HCT116 (cell line): ENCODE measurements at regions of chr18 and their contacts with region 1.

Region 1: DNA sequence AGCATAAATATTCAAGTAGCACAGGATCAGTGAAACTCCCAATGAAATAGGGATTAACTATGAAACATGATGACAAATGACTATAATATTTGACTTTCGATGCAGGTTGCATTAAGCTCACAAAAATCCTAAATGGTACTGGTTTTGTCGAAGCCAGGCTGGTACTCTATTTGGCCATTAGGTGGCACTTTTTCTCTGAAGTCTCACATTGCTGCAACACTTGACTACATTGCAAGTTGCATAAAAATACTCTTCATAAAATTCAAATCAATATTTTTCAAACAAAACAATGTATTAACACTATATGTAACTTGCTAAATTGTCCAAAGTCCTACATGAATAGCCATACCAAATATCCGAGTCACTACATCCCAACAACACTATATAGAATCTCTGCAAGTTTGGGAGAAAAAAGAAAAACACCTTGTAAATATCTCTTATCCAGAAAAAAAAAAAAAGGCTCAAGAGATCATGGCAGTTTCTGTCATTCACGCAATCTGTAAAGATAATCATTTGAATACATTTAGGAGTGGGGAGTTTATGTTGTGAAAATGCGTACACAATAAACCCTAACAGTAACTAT is 9.5 kb downstream of the RTTN start:
- DNase-seq: no peak
- ATAC-seq: peak; percentile 80
- H3K4me3 ChIP-seq: no peak overlapping the region
- H3K27ac ChIP-seq: peak overlapping the region; percentile 43
- H3K4me1 ChIP-seq: peaks cover 20 to 31% of the 10 kb centered on the region in 2 experiments
- H3K27me3 ChIP-seq: no peaks in the 10 kb centered on the region
- CTCF ChIP-seq: peak; percentile 76 to 91 (median 79)
- POLR2A ChIP-seq: no peak
- RAD21 ChIP-seq: peak; percentile 88

Region 2: GRCh38 chr18:69978732-69979715 is 216.9 kb before region 1 on chr18:
- CTCF ChIA-PET with region 1: no interaction called
- POLR2A ChIA-PET with region 1: no interaction called
- RAD21 ChIA-PET with region 1: no interaction called
- intact Hi-C with region 1: no loop called
- DNase-seq: no peak
- ATAC-seq: no peak
- H3K4me3 ChIP-seq: no peak overlapping the region
- H3K27ac ChIP-seq: no peak overlapping the region
- H3K4me1 ChIP-seq: no peaks in the 10 kb centered on the region
- H3K27me3 ChIP-seq: no peaks in the 10 kb centered on the region
- CTCF ChIP-seq: no peak
- POLR2A ChIP-seq: no peak
- RAD21 ChIP-seq: no peak

Region 3: GRCh38 chr18:70181015-70181414 is 14.9 kb before region 1 on chr18:
- CTCF ChIA-PET with region 1: interaction called, 18 read pairs
- POLR2A ChIA-PET with region 1: interaction called, 3 read pairs
- RAD21 ChIA-PET with region 1: no interaction called
- intact Hi-C with region 1: no loop called
- DNase-seq: peak; percentile 94
- ATAC-seq: peak; percentile 88
- H3K4me3 ChIP-seq: peak overlapping the region in 1 of 2 experiments; percentile 25; a peak in 2 of 4 replicates
- H3K27ac ChIP-seq: peak overlapping the region; percentile 97
- H3K4me1 ChIP-seq: peaks cover 55 to 65% of the 10 kb centered on the region in 2 experiments
- H3K27me3 ChIP-seq: no peaks in the 10 kb centered on the region
- CTCF ChIP-seq: no peak
- POLR2A ChIP-seq: no peak
- RAD21 ChIP-seq: 0 out of 2 replicates have a peak, but pooled peaks have one; percentile 31

Region 4: DNA sequence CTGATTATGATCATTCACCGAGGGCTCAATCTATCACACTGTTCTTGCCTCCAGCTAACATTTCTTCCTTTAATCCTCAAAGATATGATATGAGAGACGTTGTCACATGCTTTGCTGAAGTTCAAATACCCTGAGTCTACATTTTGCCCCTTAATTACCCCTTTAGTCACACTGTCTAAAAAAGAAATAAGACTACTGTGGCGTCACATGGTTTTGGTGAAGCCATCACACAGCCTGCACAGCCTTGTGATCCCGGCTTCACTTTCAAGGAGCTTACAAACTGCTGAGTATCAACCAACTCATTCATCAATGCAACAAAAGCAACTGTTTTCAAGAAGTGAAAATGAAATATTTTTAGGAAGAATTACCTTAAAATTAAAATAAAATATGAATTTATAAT is 61.1 kb after region 1 on chr18:
- CTCF ChIA-PET with region 1: no interaction called
- POLR2A ChIA-PET with region 1: no interaction called
- RAD21 ChIA-PET with region 1: no interaction called
- intact Hi-C with region 1: no loop called
- DNase-seq: no peak
- ATAC-seq: no peak
- H3K4me3 ChIP-seq: no peak overlapping the region
- H3K27ac ChIP-seq: no peak overlapping the region
- H3K4me1 ChIP-seq: no peaks in the 10 kb centered on the region
- H3K27me3 ChIP-seq: no peaks in the 10 kb centered on the region
- CTCF ChIP-seq: no peak
- POLR2A ChIP-seq: no peak
- RAD21 ChIP-seq: no peak

Region 5: DNA sequence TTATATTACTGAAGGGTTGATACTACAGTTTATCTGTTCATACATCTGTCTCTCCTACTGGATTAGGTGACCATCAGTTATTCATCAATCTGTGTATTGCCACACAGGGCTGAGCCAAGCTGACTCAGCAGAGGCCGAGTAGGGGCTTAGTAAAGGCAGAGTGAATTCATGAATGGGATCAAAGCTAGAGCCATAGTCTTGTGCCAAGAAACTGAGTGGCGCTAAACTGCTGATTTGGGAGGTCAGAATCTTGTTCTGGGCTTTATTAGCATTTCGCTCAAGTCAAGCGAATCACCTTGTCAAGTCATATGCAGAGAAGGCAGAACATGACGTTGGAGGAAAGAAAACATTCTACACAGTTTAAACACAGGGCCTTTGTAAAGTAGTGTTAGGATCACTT is 127.0 kb after region 1 on chr18:
- CTCF ChIA-PET with region 1: no interaction called
- POLR2A ChIA-PET with region 1: no interaction called
- RAD21 ChIA-PET with region 1: no interaction called
- intact Hi-C with region 1: no loop called
- DNase-seq: no peak
- ATAC-seq: peak; percentile 32; the same call in 1 of the 2 replicates
- H3K4me3 ChIP-seq: no peak overlapping the region
- H3K27ac ChIP-seq: peak overlapping the region; percentile 0; the same call in 1 of the 2 replicates
- H3K4me1 ChIP-seq: peaks cover 12 to 32% of the 10 kb centered on the region in 2 experiments
- H3K27me3 ChIP-seq: no peaks in the 10 kb centered on the region
- CTCF ChIP-seq: no peak
- POLR2A ChIP-seq: no peak
- RAD21 ChIP-seq: no peak

Region 6: DNA sequence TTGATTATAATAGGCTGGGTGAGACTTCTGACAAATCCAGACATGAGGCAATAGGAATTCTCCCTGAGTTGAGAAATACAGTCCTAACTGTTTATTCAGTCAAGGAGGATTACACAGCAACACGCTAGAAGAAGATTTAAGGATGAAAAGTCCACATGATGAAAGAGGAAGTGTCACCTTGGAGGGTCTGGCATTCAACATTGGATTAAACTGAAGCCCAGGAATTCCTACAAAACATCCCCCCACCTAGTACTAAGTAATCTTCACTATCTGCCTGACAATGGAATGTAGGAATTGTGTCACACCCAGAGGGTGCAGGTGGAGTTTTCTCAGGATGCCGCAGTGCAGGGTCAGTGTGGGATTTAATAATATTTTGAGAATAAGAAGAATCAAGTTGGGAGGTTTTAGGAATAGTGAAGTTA is 235.3 kb after region 1 on chr18:
- CTCF ChIA-PET with region 1: interaction called, 64 read pairs
- POLR2A ChIA-PET with region 1: interaction called, 3 read pairs
- RAD21 ChIA-PET with region 1: interaction called, 8 to 12 read pairs
- intact Hi-C with region 1: loop called (anchors 1 kb)
- DNase-seq: no peak
- ATAC-seq: no peak
- H3K4me3 ChIP-seq: no peak overlapping the region
- H3K27ac ChIP-seq: peak overlapping the region; percentile 38
- H3K4me1 ChIP-seq: peaks cover 24 to 42% of the 10 kb centered on the region in 2 experiments
- H3K27me3 ChIP-seq: no peaks in the 10 kb centered on the region
- CTCF ChIP-seq: no peak
- POLR2A ChIP-seq: no peak
- RAD21 ChIP-seq: no peak

Region 7: GRCh38 chr18:70454704-70455322 is 258.9 kb after region 1 on chr18:
- CTCF ChIA-PET with region 1: interaction called, 27 read pairs
- POLR2A ChIA-PET with region 1: no interaction called
- RAD21 ChIA-PET with region 1: no interaction called
- intact Hi-C with region 1: loop called (anchors 2 kb)
- DNase-seq: peak; percentile 67
- ATAC-seq: peak; percentile 83
- H3K4me3 ChIP-seq: no peak overlapping the region
- H3K27ac ChIP-seq: no peak overlapping the region
- H3K4me1 ChIP-seq: 0 out of 4 replicates have a peak, but pooled peaks cover 0 to 5% of the 10 kb centered on the region in 2 experiments
- H3K27me3 ChIP-seq: no peaks in the 10 kb centered on the region
- CTCF ChIP-seq: peak; percentile 54 to 85 (median 73); a peak in 5 of 6 replicates
- POLR2A ChIP-seq: no peak
- RAD21 ChIP-seq: peak; percentile 84